GM18951 (cell line): ENCODE measurements at regions of chr1 and their contacts with region 1.

Region 1: DNA sequence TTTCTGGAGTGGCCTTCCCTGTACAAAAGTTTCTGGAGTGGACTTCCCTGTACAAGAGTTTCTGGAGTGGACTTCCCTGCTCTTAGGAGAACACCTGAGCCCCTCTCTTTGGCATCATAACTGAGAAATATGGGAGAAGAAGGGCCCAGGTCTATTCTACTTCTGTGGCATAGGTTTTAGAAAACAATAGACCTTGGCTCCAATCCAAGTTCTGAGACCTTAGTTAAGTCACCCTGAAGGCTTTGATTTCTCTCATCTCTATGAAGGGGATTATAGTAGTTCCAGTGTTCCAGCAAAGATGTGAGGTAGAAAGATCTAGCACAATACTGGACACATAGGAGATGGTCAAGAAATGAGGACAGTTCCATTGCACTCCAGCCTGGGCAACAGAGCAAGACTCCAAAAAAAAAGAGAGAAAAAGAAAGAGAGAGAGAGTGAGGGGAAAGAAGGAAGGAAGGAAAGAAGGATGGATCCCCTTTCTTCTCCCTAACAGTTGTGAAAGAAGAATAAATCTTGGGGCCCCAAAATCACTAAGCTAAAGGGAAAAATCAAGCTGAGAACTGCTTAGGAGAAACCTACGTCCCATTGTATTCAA is 13.3 kb upstream of the EIF4G3 start:
- POLR2A ChIP-seq: no peak

Region 2: GRCh38 chr1:20702416-20702815 is 487.6 kb before region 1 on chr1:
- in situ Hi-C with region 1: loop called (anchors 5 kb)
- POLR2A ChIP-seq: no peak

Region 3: GRCh38 chr1:20981915-20982314 is 208.1 kb before region 1 on chr1:
- in situ Hi-C with region 1: loop called (anchors 10 kb)
- POLR2A ChIP-seq: no peak

Region 4: GRCh38 chr1:21280011-21280471 is 90.0 kb after region 1 on chr1:
- in situ Hi-C with region 1: no loop called
- POLR2A ChIP-seq: no peak